Right ventricle myocardium inferior (tissue), 1 donor: ENCODE measurements at regions of chr7 and their contacts with region 1.

Region 1: DNA sequence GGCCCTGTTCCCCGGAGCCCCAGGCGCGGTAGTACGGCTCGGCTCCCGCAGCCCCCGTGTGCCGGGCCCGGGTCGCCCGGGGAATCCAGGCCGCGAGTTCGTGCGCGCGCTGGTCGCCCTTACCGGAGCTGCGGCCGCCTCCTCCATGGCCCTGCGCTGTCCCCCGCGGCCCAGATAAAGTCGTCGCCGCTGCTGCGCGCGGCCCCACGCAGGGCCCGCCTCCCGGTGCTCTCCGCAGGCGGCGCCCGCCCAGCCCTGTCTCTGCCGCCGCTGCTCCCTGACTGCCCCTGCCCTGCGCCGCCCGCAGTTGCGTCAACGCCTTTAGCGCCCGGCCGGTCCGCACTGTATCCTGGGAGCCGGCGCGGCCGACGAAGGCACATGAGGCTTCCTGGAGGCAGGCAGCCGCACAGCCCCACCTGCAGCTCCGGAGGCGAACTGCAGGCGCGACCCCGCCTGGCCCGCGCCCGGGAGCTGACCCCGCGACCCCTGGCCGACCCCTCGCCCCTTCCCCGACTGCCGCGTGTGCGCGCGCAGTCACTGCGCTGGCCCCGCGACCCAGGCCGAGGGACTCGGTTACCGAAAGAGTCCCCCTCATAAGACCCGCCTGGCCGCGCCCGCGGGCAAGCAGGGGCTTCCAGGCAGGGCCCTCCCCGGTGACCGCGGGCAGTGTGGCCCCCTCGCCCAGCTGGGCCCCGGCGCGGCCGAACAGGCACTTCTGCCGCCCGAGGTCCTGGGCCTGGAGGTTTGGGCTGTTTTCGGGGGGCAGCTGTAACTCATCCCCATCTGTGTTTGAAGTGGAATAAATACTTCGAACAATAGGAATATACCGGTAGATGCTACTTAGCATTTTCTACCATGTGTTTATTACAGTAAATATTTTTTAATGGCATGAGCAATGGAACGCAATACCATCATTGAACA is 127.1 kb upstream of the ZNF746 start:
- DNase-seq: peak; percentile 99
- ATAC-seq: peak; percentile 98

Region 2: GRCh38 chr7:149422129-149422913 is 202.4 kb before region 1 on chr7:
- intact Hi-C with region 1: loop called (anchors 10 kb)
- DNase-seq: peak; percentile 90
- ATAC-seq: peak; percentile 94

Region 3: GRCh38 chr7:149497456-149498261 is 127.0 kb before region 1 on chr7 and contains the start of gene ZNF746:
- intact Hi-C with region 1: loop called (anchors 10 kb)
- DNase-seq: peak; percentile 96
- ATAC-seq: peak; percentile 93
- total RNA-seq, gene ZNF746: 8.4 TPM

Region 4: GRCh38 chr7:149714910-149715471 is 90.3 kb after region 1 on chr7:
- intact Hi-C with region 1: loop called (anchors 5 kb)
- DNase-seq: no peak
- ATAC-seq: no peak